ENCODE measurements at regions of chr10 and their contacts with region 1.

Region 1: DNA sequence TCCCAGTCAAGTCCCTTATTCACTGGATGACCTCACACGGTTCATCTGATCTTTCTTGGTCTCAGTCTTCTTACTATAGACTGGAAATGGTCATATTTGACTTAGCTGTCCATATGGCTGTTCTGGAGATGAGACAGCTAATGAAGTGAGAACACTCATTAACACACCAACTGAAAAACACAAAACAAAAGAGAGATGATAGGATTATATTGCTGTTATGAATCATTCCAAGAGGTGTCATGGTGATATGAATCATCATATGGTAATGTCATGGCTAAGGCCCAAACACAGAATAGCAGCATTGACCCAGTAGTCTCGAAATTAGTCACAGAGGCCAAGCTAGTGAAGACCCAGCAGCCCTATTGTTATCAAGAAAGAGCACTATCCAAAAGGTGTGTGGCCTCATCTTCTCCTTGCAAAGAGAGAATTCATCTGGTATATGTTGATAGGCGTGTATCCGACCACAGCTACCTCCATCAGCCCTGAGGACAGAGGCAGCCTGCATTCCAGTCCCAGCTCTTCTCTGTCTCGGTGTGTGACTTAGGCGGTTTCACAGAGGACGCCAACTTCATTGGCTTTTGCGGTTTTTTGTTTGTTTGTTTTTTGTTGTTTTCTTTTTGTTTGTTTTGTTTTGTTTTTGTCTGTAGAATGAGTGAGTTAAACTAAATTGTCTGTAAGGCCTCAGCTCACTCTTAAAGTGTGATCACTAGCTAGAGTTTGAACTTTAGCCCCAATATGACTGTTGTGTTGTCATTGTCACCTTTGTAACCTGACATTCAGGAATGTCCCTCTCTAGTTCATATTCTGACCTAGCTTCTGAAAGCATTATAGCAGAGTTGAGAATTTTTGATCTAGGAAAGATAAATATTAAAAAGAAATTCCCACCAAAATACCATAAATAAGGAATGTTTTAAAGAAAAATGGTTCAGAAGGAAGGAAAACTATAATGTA is 97.4 kb upstream of the PDCD4 start:
- DNase-seq: peak; percentile 99
- ATAC-seq: peak; percentile 94
- H3K4me3 ChIP-seq: no peak overlapping the region
- H3K27ac ChIP-seq: peak overlapping the region; percentile 85
- H3K4me1 ChIP-seq: peaks cover 22% of the 10 kb centered on the region
- H3K27me3 ChIP-seq: no peaks in the 10 kb centered on the region
- CTCF ChIP-seq: no peak
- EP300 ChIP-seq: peak; percentile 100
- POLR2A ChIP-seq: peak; percentile 38; the same call in 1 of the 2 replicates
- RAD21 ChIP-seq: no peak

Region 2: GRCh38 chr10:109922976-109923921 is 851.1 kb before region 1 on chr10 and contains the start of gene XPNPEP1:
- CTCF ChIA-PET with region 1: no interaction called
- POLR2A ChIA-PET with region 1: no interaction called
- RAD21 ChIA-PET with region 1: no interaction called
- SMC1A ChIA-PET with region 1: no interaction called
- in situ Hi-C with region 1: no loop called
- intact Hi-C with region 1: no loop called
- DNase-seq: no peak
- ATAC-seq: peak; percentile 97
- H3K4me3 ChIP-seq: peak within 1 kb of the TSS; percentile 84
- H3K27ac ChIP-seq: peak within 1 kb of the TSS; percentile 83
- H3K4me1 ChIP-seq: peaks cover 14% of the 10 kb centered on the region
- H3K27me3 ChIP-seq: no peaks in the 10 kb centered on the region; a peak in 1 of 4 replicates
- CTCF ChIP-seq: no peak
- EP300 ChIP-seq: no peak
- POLR2A ChIP-seq: peak; percentile 98
- RAD21 ChIP-seq: no peak
- polyA plus RNA-seq, gene XPNPEP1: 22.7 to 28.4 TPM

Region 3: DNA sequence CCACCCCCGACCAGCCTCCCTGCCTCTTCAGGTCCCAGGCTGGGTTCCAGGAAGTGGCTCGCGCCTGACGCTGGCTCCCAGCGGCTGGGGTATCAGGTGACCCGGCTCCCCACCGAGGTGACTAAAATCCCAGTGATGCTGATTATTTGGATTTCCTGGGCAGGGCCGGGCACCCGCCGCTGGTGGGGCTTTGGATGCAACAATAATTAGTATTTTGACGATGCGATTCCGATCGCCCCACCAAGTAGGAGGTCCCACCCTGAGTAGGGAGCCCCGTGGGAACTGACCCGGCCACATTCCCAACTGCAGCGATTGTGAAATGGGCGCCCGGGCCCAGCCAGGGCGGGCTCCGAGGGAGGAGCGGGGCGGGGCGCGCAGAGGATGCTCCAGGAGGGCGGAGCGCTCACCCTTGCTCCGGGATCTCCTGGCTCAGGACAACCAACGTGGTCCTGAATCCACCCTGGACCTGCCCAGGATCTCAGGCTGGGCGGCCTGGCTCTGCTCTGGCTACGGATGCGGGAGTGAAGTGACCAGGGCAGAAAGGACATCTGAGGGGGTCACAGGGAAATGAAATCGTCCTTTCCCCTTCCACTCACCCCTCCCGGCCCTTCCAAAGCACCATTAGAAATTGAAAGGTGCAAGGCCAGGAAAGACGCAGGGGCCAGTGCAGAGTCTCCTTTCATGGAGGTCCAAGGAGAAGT is 244.1 kb before region 1 on chr10:
- CTCF ChIA-PET with region 1: no interaction called
- POLR2A ChIA-PET with region 1: no interaction called
- RAD21 ChIA-PET with region 1: no interaction called
- SMC1A ChIA-PET with region 1: no interaction called
- in situ Hi-C with region 1: no loop called
- intact Hi-C with region 1: no loop called
- DNase-seq: no peak
- ATAC-seq: peak; percentile 35
- H3K4me3 ChIP-seq: peak overlapping the region; percentile 30; the same call in 1 of the 2 replicates
- H3K27ac ChIP-seq: 0 out of 2 replicates have a peak overlapping the region, but pooled peaks have one; percentile 18
- H3K4me1 ChIP-seq: peaks cover 36% of the 10 kb centered on the region
- H3K27me3 ChIP-seq: no peaks in the 10 kb centered on the region
- CTCF ChIP-seq: no peak
- EP300 ChIP-seq: no peak
- POLR2A ChIP-seq: no peak
- RAD21 ChIP-seq: no peak

Region 4: DNA sequence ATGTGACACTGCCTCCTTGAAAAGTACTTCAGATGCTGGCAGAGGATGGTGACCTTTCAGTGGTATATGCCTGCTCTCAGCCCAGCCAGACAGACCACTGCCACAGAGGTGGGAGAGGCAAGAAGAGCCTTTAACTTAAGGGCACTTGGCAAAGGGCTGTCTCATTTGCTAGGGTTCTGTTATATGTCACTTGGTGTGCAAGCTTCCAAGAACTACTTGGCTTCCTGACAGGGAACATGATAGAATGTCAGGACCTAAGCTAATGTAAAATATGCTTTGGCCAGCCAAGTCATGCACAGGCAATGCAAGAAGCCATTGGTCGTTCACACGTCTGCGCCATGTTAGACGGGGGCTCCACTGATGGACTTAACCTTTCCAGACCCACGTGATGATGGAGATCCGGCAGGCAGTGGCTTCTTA is 75.6 kb before region 1 on chr10:
- CTCF ChIA-PET with region 1: no interaction called
- POLR2A ChIA-PET with region 1: no interaction called
- RAD21 ChIA-PET with region 1: no interaction called
- SMC1A ChIA-PET with region 1: no interaction called
- in situ Hi-C with region 1: no loop called
- intact Hi-C with region 1: no loop called
- DNase-seq: no peak
- ATAC-seq: no peak
- H3K4me3 ChIP-seq: no peak overlapping the region
- H3K27ac ChIP-seq: no peak overlapping the region
- H3K4me1 ChIP-seq: peaks cover 7% of the 10 kb centered on the region
- H3K27me3 ChIP-seq: peaks cover 0 to 5% of the 10 kb centered on the region in 2 experiments; a peak in 1 of 4 replicates
- CTCF ChIP-seq: no peak
- EP300 ChIP-seq: no peak
- POLR2A ChIP-seq: no peak
- RAD21 ChIP-seq: no peak

Region 5: GRCh38 chr10:110794808-110795207 is 20.5 kb after region 1 on chr10:
- CTCF ChIA-PET with region 1: interaction called, 5 read pairs
- POLR2A ChIA-PET with region 1: interaction called, 15 read pairs
- RAD21 ChIA-PET with region 1: interaction called, 18 read pairs
- SMC1A ChIA-PET with region 1: interaction called, 327 read pairs
- in situ Hi-C with region 1: no loop called
- intact Hi-C with region 1: no loop called
- DNase-seq: no peak
- ATAC-seq: no peak
- H3K4me3 ChIP-seq: no peak overlapping the region
- H3K27ac ChIP-seq: no peak overlapping the region
- H3K4me1 ChIP-seq: peaks cover 4% of the 10 kb centered on the region; the same call in 1 of the 2 replicates
- H3K27me3 ChIP-seq: no peaks in the 10 kb centered on the region
- CTCF ChIP-seq: no peak
- EP300 ChIP-seq: no peak
- POLR2A ChIP-seq: no peak
- RAD21 ChIP-seq: no peak

Region 6: DNA sequence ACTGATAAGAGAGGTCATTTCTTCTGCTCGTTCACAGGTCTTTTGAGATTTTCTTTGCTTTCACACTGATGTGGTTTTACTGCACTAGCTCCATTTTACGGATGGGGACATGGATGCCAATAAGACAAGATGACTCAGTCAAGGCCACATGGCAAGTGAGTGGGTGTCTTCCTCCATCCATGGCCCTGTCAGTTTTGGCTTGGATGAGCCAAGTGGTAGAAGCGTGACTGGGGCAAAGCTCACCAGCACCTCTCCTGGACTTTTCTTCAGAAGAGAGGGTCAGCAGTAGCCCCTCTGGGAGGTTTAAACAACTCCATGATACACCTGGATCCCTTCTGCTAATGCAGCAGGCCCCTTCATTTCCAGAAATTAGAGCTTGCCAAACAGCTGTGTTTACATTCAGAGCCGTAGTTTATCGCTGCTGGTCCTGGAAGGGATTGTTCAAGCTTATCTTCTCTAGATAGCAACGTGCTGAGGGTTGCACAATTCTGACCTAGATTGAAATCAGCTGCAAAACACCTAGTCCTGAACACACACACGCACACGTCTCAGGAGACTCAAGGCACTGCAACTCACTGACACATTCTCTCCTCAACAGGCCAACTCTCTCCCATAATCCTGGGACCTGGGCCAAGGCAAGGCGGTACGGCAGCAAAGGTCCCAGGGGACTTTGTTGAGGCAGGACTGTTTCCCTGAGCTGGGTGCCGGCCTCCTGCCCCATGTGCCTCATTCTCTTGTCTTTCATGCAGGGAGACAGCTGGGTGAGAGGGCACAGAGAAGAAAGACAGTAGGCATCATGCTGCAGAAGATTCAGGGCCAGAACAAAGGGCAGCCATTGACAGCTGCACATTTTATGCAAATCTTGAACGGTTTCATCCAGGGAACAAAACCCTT is 83.2 kb after region 1 on chr10:
- CTCF ChIA-PET with region 1: interaction called, 3 read pairs
- POLR2A ChIA-PET with region 1: interaction called, 5 read pairs
- RAD21 ChIA-PET with region 1: interaction called, 23 read pairs
- SMC1A ChIA-PET with region 1: interaction called, 14 read pairs
- in situ Hi-C with region 1: no loop called
- intact Hi-C with region 1: no loop called
- DNase-seq: peak; percentile 78
- ATAC-seq: peak; percentile 39
- H3K4me3 ChIP-seq: no peak overlapping the region
- H3K27ac ChIP-seq: peak overlapping the region; percentile 98
- H3K4me1 ChIP-seq: peaks cover 67% of the 10 kb centered on the region
- H3K27me3 ChIP-seq: no peaks in the 10 kb centered on the region
- CTCF ChIP-seq: no peak
- EP300 ChIP-seq: no peak
- POLR2A ChIP-seq: no peak
- RAD21 ChIP-seq: no peak

Region 7: GRCh38 chr10:110871298-110872084 is 97.1 kb after region 1 on chr10 and contains the start of gene PDCD4:
- CTCF ChIA-PET with region 1: interaction called, 3 read pairs
- POLR2A ChIA-PET with region 1: interaction called, 12 read pairs
- RAD21 ChIA-PET with region 1: interaction called, 11 read pairs
- SMC1A ChIA-PET with region 1: interaction called, 7 read pairs
- in situ Hi-C with region 1: no loop called
- intact Hi-C with region 1: loop called (anchors 5 kb)
- DNase-seq: peak; percentile 86
- ATAC-seq: peak; percentile 78
- H3K4me3 ChIP-seq: peak within 1 kb of the TSS; percentile 65
- H3K27ac ChIP-seq: peak within 1 kb of the TSS; percentile 99
- H3K4me1 ChIP-seq: peaks cover 48% of the 10 kb centered on the region
- H3K27me3 ChIP-seq: no peaks in the 10 kb centered on the region
- CTCF ChIP-seq: no peak
- EP300 ChIP-seq: no peak
- POLR2A ChIP-seq: peak; percentile 96
- RAD21 ChIP-seq: no peak
- polyA plus RNA-seq, gene PDCD4: 101 to 138 TPM

Region 8: DNA sequence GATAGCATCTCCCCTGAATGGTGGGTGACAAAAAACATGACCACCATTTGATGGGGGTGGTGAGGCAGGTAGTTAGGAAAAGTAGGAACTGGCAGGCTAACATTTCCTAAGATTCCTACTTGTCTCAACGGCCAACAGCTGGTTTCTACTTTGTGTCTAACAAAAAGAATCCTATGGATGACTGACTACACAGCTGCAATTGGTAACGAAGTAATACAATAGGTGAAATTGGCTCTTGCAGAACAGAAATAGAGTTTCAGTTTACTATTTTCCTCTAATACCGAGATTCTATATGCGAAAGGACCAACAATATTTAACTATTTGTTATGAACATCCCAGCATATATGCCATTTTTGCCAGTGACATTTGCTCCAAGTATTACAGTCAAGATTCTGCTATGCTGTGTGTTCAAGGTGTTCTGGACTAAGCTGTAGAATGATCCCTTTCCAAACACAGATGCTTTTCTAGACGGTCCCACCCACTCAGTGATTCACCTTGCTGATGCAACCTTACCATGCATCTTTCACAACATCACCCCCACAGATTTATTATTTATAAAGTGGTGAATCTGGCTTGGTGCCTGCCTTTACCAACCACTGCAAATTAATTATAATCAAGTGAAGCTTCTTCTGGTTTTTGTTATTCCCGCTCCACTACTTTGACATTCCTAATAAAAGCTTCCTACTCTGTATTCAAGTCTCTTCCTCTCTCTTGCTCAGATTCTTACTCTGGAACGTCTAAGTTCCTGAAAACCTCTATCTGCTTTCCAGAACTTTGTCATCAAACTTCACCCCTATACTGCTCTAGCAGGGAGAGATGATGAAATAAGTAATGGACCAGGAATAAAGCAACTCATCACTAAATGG is 127.8 kb after region 1 on chr10:
- CTCF ChIA-PET with region 1: no interaction called
- POLR2A ChIA-PET with region 1: interaction called, 10 read pairs
- RAD21 ChIA-PET with region 1: interaction called, 6 read pairs
- SMC1A ChIA-PET with region 1: interaction called, 4 read pairs
- in situ Hi-C with region 1: no loop called
- intact Hi-C with region 1: no loop called
- DNase-seq: no peak
- ATAC-seq: peak; percentile 49
- H3K4me3 ChIP-seq: no peak overlapping the region
- H3K27ac ChIP-seq: no peak overlapping the region
- H3K4me1 ChIP-seq: peaks cover 7% of the 10 kb centered on the region; the same call in 1 of the 2 replicates
- H3K27me3 ChIP-seq: no peaks in the 10 kb centered on the region
- CTCF ChIP-seq: no peak
- EP300 ChIP-seq: no peak
- POLR2A ChIP-seq: peak; percentile 12; the same call in 1 of the 2 replicates
- RAD21 ChIP-seq: no peak